ENCODE measurements at regions of chr20 and their contacts with region 1.

Region 1: DNA sequence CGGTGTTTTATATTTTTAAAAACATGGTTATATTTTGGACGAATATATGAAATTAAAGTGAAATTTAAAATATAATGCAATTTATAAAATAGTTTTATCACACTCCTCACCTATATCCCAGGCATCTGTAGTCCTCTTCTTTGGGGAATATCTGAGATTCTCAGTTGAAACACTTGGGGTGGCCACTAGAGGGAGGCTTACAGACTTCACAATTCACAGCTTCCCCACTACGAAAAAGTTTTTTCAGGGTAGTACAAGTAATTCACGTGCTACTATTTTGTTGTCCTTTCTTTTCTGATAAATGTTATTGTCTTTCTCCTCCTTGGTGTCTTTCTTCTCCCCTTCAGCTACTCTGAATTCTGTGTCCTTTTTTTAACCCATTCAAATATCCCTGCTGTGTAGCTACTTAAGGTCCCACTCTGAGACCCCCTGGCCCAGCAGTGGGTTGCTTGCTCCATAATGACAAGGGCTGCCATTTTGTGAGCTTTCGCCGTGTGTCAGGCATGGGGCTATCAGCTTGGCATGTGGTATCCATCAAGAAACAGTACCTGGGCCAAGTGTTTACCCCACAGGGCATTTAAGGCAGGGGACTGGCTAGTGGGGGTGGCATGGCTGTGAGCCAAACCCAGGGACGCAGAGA is 43.6 kb upstream of the PHACTR3 start:
- H3K4me3 ChIP-seq: no peak overlapping the region
- H3K27ac ChIP-seq: no peak overlapping the region
- H3K4me1 ChIP-seq: no peaks in the 10 kb centered on the region
- CTCF ChIP-seq: peak; percentile 18; the same call in 1 of the 2 replicates

Region 2: GRCh38 chr20:59365611-59366285 is 195.0 kb before region 1 on chr20:
- CTCF ChIA-PET with region 1: no interaction called
- POLR2A ChIA-PET with region 1: no interaction called
- H3K4me3 ChIP-seq: no peak overlapping the region
- H3K27ac ChIP-seq: no peak overlapping the region
- H3K4me1 ChIP-seq: no peaks in the 10 kb centered on the region
- CTCF ChIP-seq: no peak

Region 3: GRCh38 chr20:59469267-59470252 is 91.1 kb before region 1 on chr20:
- CTCF ChIA-PET with region 1: no interaction called
- POLR2A ChIA-PET with region 1: no interaction called
- H3K4me3 ChIP-seq: no peak overlapping the region
- H3K27ac ChIP-seq: no peak overlapping the region
- H3K4me1 ChIP-seq: no peaks in the 10 kb centered on the region
- CTCF ChIP-seq: no peak

Region 4: GRCh38 chr20:59547596-59547995 is 13.1 kb before region 1 on chr20:
- CTCF ChIA-PET with region 1: interaction called, 12 read pairs
- POLR2A ChIA-PET with region 1: no interaction called
- H3K4me3 ChIP-seq: no peak overlapping the region
- H3K27ac ChIP-seq: no peak overlapping the region
- H3K4me1 ChIP-seq: no peaks in the 10 kb centered on the region
- CTCF ChIP-seq: no peak

Measured in HEK293 (cell line).